ENCODE measurements at regions of chrX and their contacts with region 1.

Region 1: GRCh38 chrX:48801280-48802088 is at the start of gene HDAC6:
- DNase-seq: peak; percentile 95
- ATAC-seq: peak; percentile 93
- H3K4me3 ChIP-seq: peak within 1 kb of the TSS; percentile 64 to 76
- H3K27ac ChIP-seq: peak within 1 kb of the TSS; percentile 95
- H3K4me1 ChIP-seq: 0 out of 2 replicates have a peak, but pooled peaks cover 3% of the 10 kb centered on the region
- H3K27me3 ChIP-seq: no peaks in the 10 kb centered on the region
- CTCF ChIP-seq: no peak
- total RNA-seq, gene HDAC6: 97.1 TPM

Region 2: GRCh38 chrX:48574270-48575266 is 226.9 kb before region 1 on chrX and contains the start of gene RBM3:
- CTCF ChIA-PET with region 1: no interaction called
- POLR2A ChIA-PET with region 1: no interaction called
- in situ Hi-C with region 1: no loop called
- intact Hi-C with region 1: no loop called
- DNase-seq: peak; percentile 81
- ATAC-seq: peak; percentile 97
- H3K4me3 ChIP-seq: peak within 1 kb of the TSS; percentile 81 to 99
- H3K27ac ChIP-seq: peak within 1 kb of the TSS; percentile 99
- H3K4me1 ChIP-seq: peaks cover 11% of the 10 kb centered on the region
- H3K27me3 ChIP-seq: no peaks in the 10 kb centered on the region
- CTCF ChIP-seq: no peak; the same call in 1 of the 2 replicates
- total RNA-seq, gene RBM3: 528 TPM

Region 3: DNA sequence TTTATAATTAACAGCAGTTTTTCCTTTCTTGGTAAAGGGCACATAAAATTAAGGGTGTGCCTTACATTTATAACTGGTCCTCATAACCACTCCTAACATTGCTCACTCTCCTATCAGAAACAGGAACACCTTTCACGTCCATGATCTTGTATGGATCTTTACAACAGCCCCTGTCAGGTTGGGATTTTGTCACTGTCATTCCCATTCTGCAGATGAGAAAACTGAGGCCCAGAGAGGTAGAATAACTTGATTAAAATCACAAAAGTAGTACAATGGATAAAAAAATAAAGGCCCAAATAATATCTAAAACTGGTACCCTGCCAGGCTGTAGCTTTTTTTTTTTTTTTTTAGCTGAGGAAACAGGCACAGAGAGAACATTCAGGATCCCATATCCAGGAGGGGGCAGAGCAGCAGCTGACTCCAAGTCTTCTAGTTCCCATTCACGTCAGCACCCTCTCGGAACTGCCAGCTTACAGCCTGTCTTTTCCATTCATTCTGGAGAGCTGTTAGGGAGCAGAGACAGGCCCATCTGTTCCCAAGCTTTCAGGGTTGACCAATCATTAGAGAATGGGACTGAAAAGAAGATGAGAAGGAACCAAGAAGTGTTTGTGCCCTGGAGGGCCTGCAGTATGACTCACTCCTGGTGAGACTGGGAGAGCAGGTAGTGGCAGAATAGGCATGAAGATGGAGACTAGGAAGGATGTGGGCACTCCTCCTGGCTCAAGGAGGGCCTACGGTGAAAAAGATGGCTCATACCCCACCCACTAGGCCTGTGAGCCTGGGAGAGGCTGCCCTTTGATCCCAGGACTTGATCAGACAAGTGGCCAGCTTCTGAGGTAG is 97.6 kb before region 1 on chrX:
- CTCF ChIA-PET with region 1: no interaction called
- POLR2A ChIA-PET with region 1: no interaction called
- in situ Hi-C with region 1: no loop called
- intact Hi-C with region 1: no loop called
- DNase-seq: no peak
- ATAC-seq: 0 out of 2 replicates have a peak, but pooled peaks have one; percentile 14
- H3K4me3 ChIP-seq: no peak overlapping the region
- H3K27ac ChIP-seq: no peak overlapping the region
- H3K4me1 ChIP-seq: 0 out of 2 replicates have a peak, but pooled peaks cover 4% of the 10 kb centered on the region
- H3K27me3 ChIP-seq: no peaks in the 10 kb centered on the region
- CTCF ChIP-seq: no peak

Region 4: GRCh38 chrX:48816014-48816810 is 14.7 kb after region 1 on chrX:
- CTCF ChIA-PET with region 1: no interaction called
- POLR2A ChIA-PET with region 1: interaction called, 13 read pairs
- in situ Hi-C with region 1: no loop called
- intact Hi-C with region 1: no loop called
- DNase-seq: no peak
- ATAC-seq: 0 out of 2 replicates have a peak, but pooled peaks have one; percentile 36
- H3K4me3 ChIP-seq: no peak overlapping the region
- H3K27ac ChIP-seq: no peak overlapping the region
- H3K4me1 ChIP-seq: no peaks in the 10 kb centered on the region
- H3K27me3 ChIP-seq: no peaks in the 10 kb centered on the region
- CTCF ChIP-seq: no peak

Measured in Panc1 (cell line).